Naive thymus-derived CD4-positive, alpha-beta T cell (primary cell): ENCODE measurements at regions of chr15 and their contacts with region 1.

Region 1: DNA sequence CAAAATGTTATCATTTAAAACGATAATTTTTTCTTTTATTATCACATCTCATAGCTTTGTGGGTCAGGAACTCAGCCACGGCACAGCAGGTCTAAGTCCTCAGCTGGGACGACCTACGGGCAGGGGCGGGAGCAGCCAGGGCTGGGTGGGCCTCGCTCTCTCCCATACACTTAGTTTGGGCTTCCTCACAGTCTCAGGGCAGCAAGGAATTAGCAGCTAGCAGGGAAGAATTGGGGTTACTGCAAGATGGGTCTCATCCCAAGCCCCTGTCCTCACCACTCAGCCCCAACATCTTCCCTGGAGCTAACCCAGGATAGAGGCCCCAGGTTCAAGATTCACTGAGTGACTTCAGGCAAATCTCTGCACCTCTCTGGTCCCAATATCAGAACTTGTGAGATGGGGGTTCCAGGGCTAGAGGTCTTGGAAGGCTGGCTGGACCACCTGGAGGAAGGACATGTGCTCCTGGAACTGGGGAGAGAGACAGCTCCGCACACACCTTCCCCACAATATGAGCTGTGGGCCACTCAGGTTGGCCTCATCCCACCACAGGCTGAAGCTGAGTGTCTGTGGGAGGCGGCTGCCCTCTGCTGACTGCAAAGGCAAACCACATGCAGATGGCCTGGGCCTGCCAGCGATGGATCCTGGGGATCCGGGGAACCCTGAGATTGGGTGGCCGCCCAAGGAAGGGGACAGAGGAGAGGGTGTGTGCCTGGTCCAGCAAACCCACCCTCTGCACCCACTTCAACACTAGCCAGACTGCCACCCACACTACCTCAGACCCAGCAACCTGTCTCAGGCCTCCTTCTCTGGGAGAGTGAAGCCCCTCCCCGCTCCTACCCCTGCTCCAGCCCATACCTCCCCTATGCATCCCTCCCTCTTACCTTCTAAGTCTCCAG is 45.0 kb downstream of the CYP11A1 start:
- DNase-seq: peak; percentile 19 to 53 (median 45)
- ATAC-seq: peak; percentile 78
- H3K4me3 ChIP-seq: no peak overlapping the region
- H3K4me3 Mint-ChIP-seq: no peak overlapping the region
- H3K27ac ChIP-seq: no peak overlapping the region
- H3K27ac Mint-ChIP-seq: no peak overlapping the region
- H3K4me1 ChIP-seq: peaks cover 0 to 4% of the 10 kb centered on the region in 2 donors
- H3K4me1 Mint-ChIP-seq: peaks cover 0 to 9% (median 6%) of the 10 kb centered on the region in 7 donors
- H3K27me3 ChIP-seq: no peaks in the 10 kb centered on the region
- H3K27me3 Mint-ChIP-seq: peaks cover 0 to 7% (median 0%) of the 10 kb centered on the region in 5 donors

Region 2: DNA sequence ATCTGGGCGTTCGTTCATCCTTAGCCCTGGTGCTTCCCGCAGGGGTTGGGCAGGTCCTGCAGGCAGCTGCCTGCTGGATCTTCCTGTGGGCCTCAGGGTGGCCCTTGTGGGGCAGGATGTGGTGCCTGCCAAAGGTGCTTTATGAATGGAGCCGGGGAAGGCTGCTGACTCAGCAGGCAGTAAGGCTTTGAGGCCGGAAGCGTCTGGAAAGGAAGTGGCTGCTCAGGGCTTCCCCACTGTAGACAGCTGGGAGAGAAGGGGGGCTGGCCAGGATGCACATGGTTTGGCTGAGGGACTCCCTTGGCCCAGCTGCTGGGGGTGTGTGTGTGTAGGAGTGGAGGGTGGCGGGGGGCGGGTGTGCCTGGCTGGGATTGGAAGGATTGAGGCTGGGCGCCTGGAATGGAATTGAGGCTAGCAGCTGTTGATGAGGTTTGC is 625.4 kb before region 1 on chr15:
- CTCF ChIA-PET with region 1: no interaction called
- POLR2A ChIA-PET with region 1: no interaction called
- intact Hi-C with region 1: no loop called
- DNase-seq: peak; percentile 34 to 80 (median 67)
- ATAC-seq: peak; percentile 93
- H3K4me3 ChIP-seq: no peak overlapping the region
- H3K4me3 Mint-ChIP-seq: peak overlapping the region in 8 of 10 donors; percentile 10 to 61 (median 44)
- H3K27ac ChIP-seq: no peak overlapping the region
- H3K27ac Mint-ChIP-seq: peak overlapping the region in 1 of 9 donors; percentile 74
- H3K4me1 ChIP-seq: peaks cover 8 to 18% of the 10 kb centered on the region in 2 donors
- H3K4me1 Mint-ChIP-seq: peaks cover 13 to 53% (median 18%) of the 10 kb centered on the region in 7 donors
- H3K27me3 ChIP-seq: peaks cover 3 to 8% of the 10 kb centered on the region in 2 donors
- H3K27me3 Mint-ChIP-seq: peaks cover 54 to 69% (median 65%) of the 10 kb centered on the region in 5 donors

Region 3: GRCh38 chr15:73950831-73951561 is 371.4 kb before region 1 on chr15:
- CTCF ChIA-PET with region 1: interaction called, 10 read pairs
- POLR2A ChIA-PET with region 1: no interaction called
- intact Hi-C with region 1: loop called in 1 of 2 experiments (anchors 1 kb)
- DNase-seq: peak; percentile 53 to 76 (median 71)
- ATAC-seq: peak; percentile 89
- H3K4me3 ChIP-seq: no peak overlapping the region
- H3K4me3 Mint-ChIP-seq: peak overlapping the region in 1 of 10 donors; percentile 23
- H3K27ac ChIP-seq: no peak overlapping the region
- H3K27ac Mint-ChIP-seq: peak overlapping the region; percentile 10 to 97 (median 83)
- H3K4me1 ChIP-seq: peaks cover 0 to 6% of the 10 kb centered on the region in 2 donors
- H3K4me1 Mint-ChIP-seq: peaks cover 4 to 9% (median 7%) of the 10 kb centered on the region in 7 donors
- H3K27me3 ChIP-seq: no peaks in the 10 kb centered on the region
- H3K27me3 Mint-ChIP-seq: peaks cover 0 to 3% (median 0%) of the 10 kb centered on the region in 5 donors

Region 4: DNA sequence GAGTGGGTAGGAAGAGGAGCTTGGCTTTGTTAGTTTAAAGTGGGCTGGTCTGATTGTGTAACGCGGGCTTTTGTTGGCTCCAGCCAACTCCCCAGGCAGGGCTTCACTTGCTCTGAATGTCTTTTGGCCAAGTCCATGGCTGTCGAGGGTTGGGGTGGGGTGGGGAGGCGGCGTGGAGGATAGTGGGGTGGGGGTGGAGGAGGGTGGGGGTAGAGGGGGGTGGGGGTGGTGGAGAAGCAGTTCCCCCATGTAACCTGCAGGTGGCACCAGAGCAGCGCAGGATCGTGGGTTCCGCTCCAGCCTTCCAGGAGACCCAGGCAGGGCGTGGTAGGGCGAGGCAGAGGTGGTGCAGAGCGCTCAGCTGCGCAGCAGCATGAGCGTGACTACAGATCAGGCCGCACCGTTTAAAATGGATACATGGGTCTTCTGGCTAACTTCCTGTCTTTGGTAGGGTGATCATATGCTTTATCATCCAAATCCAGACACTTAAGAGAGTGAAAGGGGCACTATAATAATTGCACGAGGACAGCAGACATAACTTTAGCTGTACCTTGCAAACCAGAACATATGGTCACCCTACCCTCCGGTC is 268.4 kb before region 1 on chr15:
- CTCF ChIA-PET with region 1: interaction called, 3 read pairs
- POLR2A ChIA-PET with region 1: no interaction called
- intact Hi-C with region 1: loop called (anchors 2 to 10 kb)
- DNase-seq: peak; percentile 38 to 73 (median 71)
- ATAC-seq: peak; percentile 99
- H3K4me3 ChIP-seq: no peak overlapping the region
- H3K4me3 Mint-ChIP-seq: peak overlapping the region in 9 of 10 donors; percentile 4 to 61 (median 46)
- H3K27ac ChIP-seq: no peak overlapping the region
- H3K27ac Mint-ChIP-seq: peak overlapping the region in 1 of 9 donors; percentile 37
- H3K4me1 ChIP-seq: peaks cover 0 to 1% of the 10 kb centered on the region in 2 donors
- H3K4me1 Mint-ChIP-seq: peaks cover 7 to 18% (median 12%) of the 10 kb centered on the region in 7 donors
- H3K27me3 ChIP-seq: no peaks in the 10 kb centered on the region
- H3K27me3 Mint-ChIP-seq: no peaks in the 10 kb centered on the region

Region 5: DNA sequence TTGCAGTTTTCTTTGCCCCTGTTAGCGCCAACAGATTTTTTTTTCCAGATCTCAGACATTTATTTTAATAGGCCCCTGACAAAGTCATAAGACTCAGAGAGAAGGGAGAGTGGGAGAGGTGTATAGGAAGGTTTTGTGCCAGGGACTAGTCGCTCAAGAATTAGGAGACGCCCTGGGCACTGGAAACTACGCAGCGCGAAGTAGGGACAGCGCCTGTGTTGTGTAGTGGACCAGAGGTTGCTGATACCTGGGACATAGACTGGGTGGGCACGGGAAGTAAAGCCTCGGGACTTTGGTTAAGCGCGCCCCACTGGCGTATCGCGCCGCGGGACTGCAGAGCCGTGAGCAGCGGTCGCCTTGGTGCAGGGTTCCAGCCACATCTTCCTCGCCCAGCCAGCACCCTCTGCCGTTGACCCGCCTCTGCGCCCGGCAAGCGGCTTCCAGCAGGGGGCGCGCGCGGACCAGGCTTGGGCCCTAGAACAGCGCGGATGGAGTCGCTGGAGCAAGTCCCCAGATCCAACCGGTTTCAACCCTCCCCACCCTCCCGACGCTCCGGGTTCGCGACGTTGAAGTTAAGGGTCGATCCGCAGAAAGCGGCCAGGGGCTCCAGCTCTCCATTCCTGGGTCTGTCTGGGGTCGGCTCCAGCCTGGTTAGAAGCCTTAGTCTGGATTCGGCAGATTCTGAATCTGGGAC is 195.0 kb before region 1 on chr15:
- CTCF ChIA-PET with region 1: interaction called, 21 read pairs
- POLR2A ChIA-PET with region 1: no interaction called
- intact Hi-C with region 1: loop called in 1 of 2 experiments (anchors 1 kb)
- DNase-seq: peak; percentile 56 to 94 (median 77)
- ATAC-seq: peak; percentile 92
- H3K4me3 ChIP-seq: peak overlapping the region; percentile 9
- H3K4me3 Mint-ChIP-seq: peak overlapping the region in 9 of 10 donors; percentile 10 to 72 (median 40)
- H3K27ac ChIP-seq: no peak overlapping the region
- H3K27ac Mint-ChIP-seq: no peak overlapping the region
- H3K4me1 ChIP-seq: peaks cover 4 to 11% of the 10 kb centered on the region in 2 donors
- H3K4me1 Mint-ChIP-seq: peaks cover 12 to 30% (median 22%) of the 10 kb centered on the region in 7 donors
- H3K27me3 ChIP-seq: peaks cover 0 to 13% of the 10 kb centered on the region in 2 donors
- H3K27me3 Mint-ChIP-seq: peaks cover 56 to 82% (median 72%) of the 10 kb centered on the region in 5 donors

Region 6: GRCh38 chr15:74291101-74292071 is 31.0 kb before region 1 on chr15:
- CTCF ChIA-PET with region 1: no interaction called
- POLR2A ChIA-PET with region 1: no interaction called
- intact Hi-C with region 1: no loop called
- DNase-seq: peak; percentile 19 to 79 (median 52)
- ATAC-seq: peak; percentile 67
- H3K4me3 ChIP-seq: no peak overlapping the region
- H3K4me3 Mint-ChIP-seq: no peak overlapping the region
- H3K27ac ChIP-seq: no peak overlapping the region
- H3K27ac Mint-ChIP-seq: no peak overlapping the region
- H3K4me1 ChIP-seq: no peaks in the 10 kb centered on the region
- H3K4me1 Mint-ChIP-seq: peaks cover 0 to 7% (median 0%) of the 10 kb centered on the region in 7 donors
- H3K27me3 ChIP-seq: peaks cover 0 to 5% of the 10 kb centered on the region in 2 donors
- H3K27me3 Mint-ChIP-seq: peaks cover 0 to 55% (median 44%) of the 10 kb centered on the region in 5 donors